ENCODE measurements at regions of chr10 and their contacts with region 1.

Region 1: GRCh38 chr10:45464958-45465567 is 91.0 kb downstream of the ALOX5 start:
- DNase-seq: peak; percentile 44
- H3K4me3 ChIP-seq: no peak overlapping the region
- H3K27ac ChIP-seq: no peak overlapping the region
- H3K27me3 ChIP-seq: no peaks in the 10 kb centered on the region
- CTCF ChIP-seq: peak; percentile 100

Region 2: GRCh38 chr10:45249978-45250693 is 214.9 kb before region 1 on chr10:
- CTCF ChIA-PET with region 1: interaction called, 12 read pairs
- POLR2A ChIA-PET with region 1: no interaction called
- DNase-seq: no peak
- H3K4me3 ChIP-seq: no peak overlapping the region
- H3K27ac ChIP-seq: no peak overlapping the region
- H3K27me3 ChIP-seq: peaks cover 7% of the 10 kb centered on the region
- CTCF ChIP-seq: peak; percentile 48

Region 3: DNA sequence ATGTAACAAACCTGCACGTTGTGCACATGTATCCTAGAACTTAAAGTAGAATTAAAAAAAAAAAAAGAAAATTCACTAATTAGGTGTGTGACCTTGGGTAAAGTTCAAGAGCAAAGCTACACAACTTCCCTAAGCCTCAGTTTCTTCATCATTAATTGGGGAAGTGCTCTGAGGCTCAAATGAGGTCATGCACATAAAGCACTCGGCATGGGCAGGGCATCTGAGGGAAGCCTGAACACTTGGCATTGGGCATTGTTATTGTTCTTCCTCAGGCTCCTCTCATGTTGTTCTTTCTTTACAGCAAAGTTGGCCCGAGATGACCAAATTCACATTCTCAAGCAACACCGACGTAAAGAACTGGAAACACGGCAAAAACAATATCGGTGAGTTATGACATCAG is 69.5 kb before region 1 on chr10:
- CTCF ChIA-PET with region 1: no interaction called
- POLR2A ChIA-PET with region 1: no interaction called
- DNase-seq: no peak
- H3K4me3 ChIP-seq: no peak overlapping the region
- H3K27ac ChIP-seq: no peak overlapping the region
- H3K27me3 ChIP-seq: no peaks in the 10 kb centered on the region
- CTCF ChIP-seq: no peak

Region 4: GRCh38 chr10:45453639-45454255 is 11.3 kb before region 1 on chr10:
- CTCF ChIA-PET with region 1: interaction called, 13 read pairs
- POLR2A ChIA-PET with region 1: no interaction called
- DNase-seq: no peak
- H3K4me3 ChIP-seq: no peak overlapping the region
- H3K27ac ChIP-seq: no peak overlapping the region
- H3K27me3 ChIP-seq: no peaks in the 10 kb centered on the region
- CTCF ChIP-seq: no peak

Region 5: DNA sequence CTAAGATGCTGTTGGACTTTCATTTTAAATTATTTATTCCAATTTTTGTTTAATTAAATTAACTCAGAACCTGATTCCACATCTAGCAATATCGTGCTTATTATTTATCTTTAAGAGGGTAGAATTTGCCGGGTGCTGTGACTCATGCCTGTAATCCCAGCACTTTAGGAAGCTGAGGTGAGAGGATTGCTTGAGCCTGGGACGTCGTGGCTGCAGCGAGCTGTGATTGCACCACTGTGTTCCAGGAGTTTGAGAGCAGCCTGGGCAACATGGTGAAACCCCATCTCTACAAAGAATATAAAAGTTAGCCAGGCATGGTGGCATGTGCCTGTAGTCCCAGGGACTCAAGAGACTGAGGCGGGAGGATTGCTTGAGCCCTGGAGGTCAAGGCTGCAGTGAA is 159.7 kb after region 1 on chr10:
- CTCF ChIA-PET with region 1: no interaction called
- POLR2A ChIA-PET with region 1: no interaction called
- DNase-seq: no peak
- H3K4me3 ChIP-seq: no peak overlapping the region
- H3K27ac ChIP-seq: no peak overlapping the region
- H3K27me3 ChIP-seq: no peaks in the 10 kb centered on the region
- CTCF ChIP-seq: no peak

Region 6: GRCh38 chr10:45640941-45641340 is 175.9 kb after region 1 on chr10:
- CTCF ChIA-PET with region 1: interaction called, 10 read pairs
- POLR2A ChIA-PET with region 1: no interaction called
- DNase-seq: no peak
- H3K4me3 ChIP-seq: no peak overlapping the region
- H3K27ac ChIP-seq: no peak overlapping the region
- H3K27me3 ChIP-seq: no peaks in the 10 kb centered on the region
- CTCF ChIP-seq: no peak

Region 7: DNA sequence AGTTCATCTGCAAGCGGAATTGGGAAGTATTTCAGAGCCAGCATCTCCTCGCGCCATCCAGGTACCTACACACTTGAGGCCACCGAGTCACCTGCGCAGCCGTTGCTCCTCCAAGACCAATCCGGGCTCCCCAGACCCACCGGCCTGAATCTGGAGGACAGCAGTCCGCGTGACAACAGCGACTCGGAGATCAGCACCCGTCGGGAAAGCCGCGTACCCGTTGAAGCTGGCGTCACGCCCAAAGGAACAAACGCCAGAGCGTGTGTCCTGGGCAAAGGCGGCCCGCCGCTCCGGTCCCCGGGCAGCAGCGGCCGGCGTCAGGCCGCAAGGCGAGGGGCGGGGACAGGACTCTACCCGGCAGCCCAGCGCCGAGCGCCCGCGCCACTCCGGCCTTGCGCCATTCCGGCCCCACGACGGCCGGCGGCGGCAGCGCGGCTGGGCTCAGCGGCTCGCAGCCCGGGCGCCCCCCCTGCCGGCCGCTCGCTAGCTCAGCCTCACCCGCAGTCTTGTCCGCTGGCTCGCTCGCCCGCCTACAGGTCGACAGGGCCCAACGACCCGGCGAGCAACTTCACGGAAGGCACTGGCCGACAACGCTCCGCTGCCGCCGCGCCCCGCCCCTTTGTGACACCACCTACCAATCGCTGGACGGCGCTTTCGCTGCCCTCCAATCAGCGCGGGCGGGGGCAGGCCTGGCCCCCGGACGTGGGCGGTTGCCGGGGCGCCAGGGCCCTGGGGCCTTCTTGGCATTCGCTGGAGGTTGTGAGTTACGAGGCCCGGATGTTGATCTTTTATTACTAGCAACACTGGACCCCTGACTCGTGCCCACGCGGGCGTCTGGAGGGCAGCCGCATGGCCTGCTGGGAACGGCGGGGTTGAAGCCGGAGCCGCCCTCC is 207.4 kb after region 1 on chr10 and contains the start of gene ZFAND4:
- CTCF ChIA-PET with region 1: interaction called, 28 read pairs
- POLR2A ChIA-PET with region 1: interaction called, 3 read pairs
- DNase-seq: peak; percentile 91
- H3K4me3 ChIP-seq: peak within 1 kb of the TSS; percentile 85
- H3K27ac ChIP-seq: peak within 1 kb of the TSS; percentile 65
- H3K27me3 ChIP-seq: no peaks in the 10 kb centered on the region
- CTCF ChIP-seq: peak; percentile 46
- polyA plus RNA-seq, gene ZFAND4: 3.4 and 4.1 TPM in 2 replicates

Measured in AG04450 (cell line).